ENCODE measurements at regions of chr11 and their contacts with region 1.

Region 1: DNA sequence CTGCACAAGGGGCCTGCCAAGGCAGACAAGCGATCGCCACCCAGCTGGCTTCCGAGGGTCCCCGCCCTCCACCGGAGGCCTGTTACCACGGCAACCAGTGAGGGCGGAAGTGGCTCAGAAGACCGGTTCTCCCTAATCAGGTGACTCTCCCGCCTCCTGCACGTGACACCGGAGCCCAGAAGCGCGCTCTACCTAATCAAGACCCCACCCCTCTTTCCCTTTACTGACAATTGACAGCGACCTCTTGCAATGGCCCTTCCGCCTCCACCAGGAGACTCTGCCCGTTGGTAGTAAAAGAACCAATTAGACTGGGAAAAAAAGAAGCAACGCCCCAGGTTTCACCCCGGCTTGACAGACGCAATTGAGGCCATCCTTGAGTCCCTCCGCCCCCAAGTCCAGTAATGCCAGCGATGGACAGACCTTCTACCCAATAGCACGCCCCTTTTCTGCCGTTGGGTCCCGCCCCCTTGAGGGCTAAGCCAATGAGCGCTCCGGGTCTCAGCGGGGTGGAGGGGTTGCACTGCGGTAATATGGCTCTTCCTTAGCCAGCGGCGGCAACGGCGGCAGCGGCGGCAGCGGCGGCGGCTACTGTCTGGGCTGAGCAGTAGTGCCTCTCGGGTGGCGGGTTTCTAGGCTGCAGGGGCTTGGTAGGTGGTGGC is at the start of gene UVRAG:
- DNase-seq: peak; percentile 98 to 99
- H3K4me3 ChIP-seq: peak within 1 kb of the TSS; percentile 75 to 93
- H3K27ac ChIP-seq: peak within 1 kb of the TSS; percentile 88 to 89
- H3K4me1 ChIP-seq: peaks cover 3 to 9% of the 10 kb centered on the region in 2 donors
- H3K27me3 ChIP-seq: no peaks in the 10 kb centered on the region
- CTCF ChIP-seq: no peak
- total RNA-seq, gene UVRAG: 45.2 TPM

Region 2: GRCh38 chr11:75428281-75428724 is 386.5 kb before region 1 on chr11:
- intact Hi-C with region 1: loop called (anchors 10 kb)
- DNase-seq: peak; percentile 82 to 95
- H3K4me3 ChIP-seq: peak overlapping the region; percentile 37 to 53
- H3K27ac ChIP-seq: peak overlapping the region; percentile 60 to 77
- H3K4me1 ChIP-seq: peaks cover 2 to 9% of the 10 kb centered on the region in 2 donors
- H3K27me3 ChIP-seq: no peaks in the 10 kb centered on the region
- CTCF ChIP-seq: no peak

Region 3: DNA sequence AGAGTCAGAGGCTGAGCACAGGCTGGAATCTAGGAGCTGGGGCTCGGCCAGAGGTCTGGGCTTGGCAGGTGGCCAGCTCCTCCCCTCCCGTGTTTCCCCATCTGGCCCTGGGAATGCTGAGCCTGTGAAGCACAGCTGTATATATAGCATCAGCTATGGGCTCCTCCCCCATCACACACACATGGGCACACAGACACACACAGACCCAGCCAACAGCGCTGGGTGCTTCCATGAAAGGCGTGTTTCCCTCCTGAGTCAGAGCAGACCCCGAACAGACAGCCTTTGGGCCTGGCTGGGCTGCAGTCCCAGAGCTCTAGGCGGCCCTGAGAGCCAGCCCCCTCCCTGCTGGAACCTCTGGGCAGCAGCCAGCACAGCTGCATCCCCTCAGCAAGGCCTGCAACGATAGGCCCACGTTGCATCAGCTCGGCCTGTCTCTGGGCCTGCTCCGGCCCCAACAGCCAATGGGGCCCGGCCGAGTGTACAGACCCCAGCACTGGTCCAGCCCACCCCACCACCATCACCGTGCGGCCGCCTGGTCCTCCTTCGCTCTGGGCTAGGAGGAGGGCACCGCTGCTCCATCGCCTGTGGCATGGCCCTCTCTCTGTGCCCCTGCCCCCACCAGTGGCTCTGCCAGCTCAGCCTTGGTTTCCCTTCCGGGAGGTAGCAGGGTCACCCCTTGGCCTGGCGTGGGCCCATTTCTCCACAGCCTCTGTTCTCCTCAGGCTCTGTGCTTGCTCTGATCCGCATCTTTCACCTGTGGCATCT is 260.4 kb before region 1 on chr11:
- intact Hi-C with region 1: loop called (anchors 5 kb)
- DNase-seq: peak; percentile 93 to 98
- H3K4me3 ChIP-seq: peak overlapping the region; percentile 35
- H3K27ac ChIP-seq: peak overlapping the region; percentile 95 to 97
- H3K4me1 ChIP-seq: peaks cover 21 to 40% of the 10 kb centered on the region in 2 donors
- H3K27me3 ChIP-seq: no peaks in the 10 kb centered on the region
- CTCF ChIP-seq: no peak

Region 4: DNA sequence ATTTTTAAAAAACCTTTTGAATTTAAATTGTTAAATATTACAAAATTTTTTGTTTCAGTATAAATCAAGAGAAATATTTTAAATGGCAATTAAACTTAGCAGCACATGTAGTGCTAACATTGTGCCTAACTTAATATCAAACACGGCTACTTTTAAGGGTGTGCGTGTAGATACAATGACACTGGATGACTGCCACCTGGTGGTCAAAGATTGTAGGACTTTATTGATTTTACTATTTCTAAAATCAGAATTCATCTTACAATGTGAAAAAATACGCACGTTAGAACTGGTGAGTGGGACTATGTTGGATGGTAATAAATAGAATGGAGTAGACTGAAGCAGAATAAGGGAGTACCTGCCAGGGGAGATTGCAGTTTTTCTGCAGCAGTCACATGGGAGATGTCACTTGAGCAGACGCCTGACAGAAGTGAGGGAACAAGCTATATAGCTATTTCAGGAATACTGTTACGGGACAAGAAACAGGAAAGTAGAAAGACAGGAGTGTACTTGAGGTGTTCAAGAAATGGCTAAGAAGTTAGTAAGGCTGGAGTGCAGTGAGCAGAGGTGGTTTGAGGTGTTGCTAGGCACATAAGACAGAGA is 53.1 kb after region 1 on chr11:
- intact Hi-C with region 1: loop called (anchors 5 kb)
- DNase-seq: no peak
- H3K4me3 ChIP-seq: no peak overlapping the region
- H3K27ac ChIP-seq: no peak overlapping the region
- H3K4me1 ChIP-seq: no peaks in the 10 kb centered on the region
- H3K27me3 ChIP-seq: no peaks in the 10 kb centered on the region
- CTCF ChIP-seq: peak; percentile 75 to 79 (median 77)

Region 5: GRCh38 chr11:76444384-76445123 is 629.7 kb after region 1 on chr11 and contains the start of gene EMSY:
- intact Hi-C with region 1: loop called (anchors 2 kb)
- DNase-seq: peak; percentile 89 to 99
- H3K4me3 ChIP-seq: peak within 1 kb of the TSS; percentile 87 to 90
- H3K27ac ChIP-seq: peak within 1 kb of the TSS; percentile 90 to 93
- H3K4me1 ChIP-seq: peaks cover 8 to 15% of the 10 kb centered on the region in 2 donors
- H3K27me3 ChIP-seq: no peaks in the 10 kb centered on the region
- CTCF ChIP-seq: no peak
- total RNA-seq, gene EMSY: 7.5 TPM